ENCODE measurements at regions of chr1 and their contacts with region 1.

Region 1: GRCh38 chr1:235831148-235831547 is 35.6 kb downstream of the LYST start:
- DNase-seq: peak in 4 of 5 donors; percentile 34 to 58 (median 44)
- ATAC-seq: peak; percentile 79 to 98 (median 96)
- H3K4me3 ChIP-seq: no peak overlapping the region
- H3K27ac ChIP-seq: peak overlapping the region in 1 of 12 donors; percentile 7
- H3K4me1 ChIP-seq: peaks cover 0 to 21% (median 12%) of the 10 kb centered on the region in 12 donors
- H3K27me3 ChIP-seq: no peaks in the 10 kb centered on the region
- CTCF ChIP-seq: no peak
- POLR2A ChIP-seq: no peak

Region 2: GRCh38 chr1:235006132-235006943 is 824.8 kb before region 1 on chr1:
- intact Hi-C with region 1: no loop called
- DNase-seq: no peak
- ATAC-seq: no peak
- H3K4me3 ChIP-seq: no peak overlapping the region
- H3K27ac ChIP-seq: no peak overlapping the region
- H3K4me1 ChIP-seq: peaks cover 0 to 39% (median 0%) of the 10 kb centered on the region in 12 donors
- H3K27me3 ChIP-seq: no peaks in the 10 kb centered on the region
- CTCF ChIP-seq: no peak
- POLR2A ChIP-seq: no peak

Region 3: DNA sequence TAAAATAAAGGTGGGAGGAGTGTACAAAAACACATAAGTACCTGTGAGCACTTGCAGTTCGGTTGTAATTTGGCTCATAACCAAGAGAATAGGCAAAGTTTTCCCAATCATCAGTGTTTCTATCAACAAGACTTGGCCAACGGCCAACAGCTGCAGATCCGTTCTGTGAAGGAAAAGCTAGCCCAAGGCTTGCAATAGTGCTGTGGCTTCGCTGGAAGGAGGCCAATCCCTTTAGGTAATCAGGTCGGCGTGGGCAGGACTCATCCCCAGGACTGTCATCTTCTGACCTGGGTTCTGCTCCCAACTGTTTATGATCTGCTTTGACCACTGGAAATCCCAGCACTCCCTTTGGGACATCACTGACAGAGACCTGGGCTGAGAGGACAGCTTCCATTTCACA is 72.2 kb before region 1 on chr1:
- intact Hi-C with region 1: no loop called
- DNase-seq: peak in 1 of 5 donors; percentile 17
- ATAC-seq: no peak
- H3K4me3 ChIP-seq: no peak overlapping the region
- H3K27ac ChIP-seq: no peak overlapping the region
- H3K4me1 ChIP-seq: no peaks in the 10 kb centered on the region
- H3K27me3 ChIP-seq: no peaks in the 10 kb centered on the region
- CTCF ChIP-seq: no peak
- POLR2A ChIP-seq: no peak

Region 4: GRCh38 chr1:235783148-235783776 is 47.9 kb before region 1 on chr1:
- intact Hi-C with region 1: loop called in 1 of 10 experiments (anchors 10 kb)
- DNase-seq: no peak
- ATAC-seq: no peak
- H3K4me3 ChIP-seq: no peak overlapping the region
- H3K27ac ChIP-seq: no peak overlapping the region
- H3K4me1 ChIP-seq: peaks cover 0 to 3% (median 0%) of the 10 kb centered on the region in 12 donors
- H3K27me3 ChIP-seq: no peaks in the 10 kb centered on the region
- CTCF ChIP-seq: peak; percentile 27 to 65 (median 54)
- POLR2A ChIP-seq: no peak

Region 5: DNA sequence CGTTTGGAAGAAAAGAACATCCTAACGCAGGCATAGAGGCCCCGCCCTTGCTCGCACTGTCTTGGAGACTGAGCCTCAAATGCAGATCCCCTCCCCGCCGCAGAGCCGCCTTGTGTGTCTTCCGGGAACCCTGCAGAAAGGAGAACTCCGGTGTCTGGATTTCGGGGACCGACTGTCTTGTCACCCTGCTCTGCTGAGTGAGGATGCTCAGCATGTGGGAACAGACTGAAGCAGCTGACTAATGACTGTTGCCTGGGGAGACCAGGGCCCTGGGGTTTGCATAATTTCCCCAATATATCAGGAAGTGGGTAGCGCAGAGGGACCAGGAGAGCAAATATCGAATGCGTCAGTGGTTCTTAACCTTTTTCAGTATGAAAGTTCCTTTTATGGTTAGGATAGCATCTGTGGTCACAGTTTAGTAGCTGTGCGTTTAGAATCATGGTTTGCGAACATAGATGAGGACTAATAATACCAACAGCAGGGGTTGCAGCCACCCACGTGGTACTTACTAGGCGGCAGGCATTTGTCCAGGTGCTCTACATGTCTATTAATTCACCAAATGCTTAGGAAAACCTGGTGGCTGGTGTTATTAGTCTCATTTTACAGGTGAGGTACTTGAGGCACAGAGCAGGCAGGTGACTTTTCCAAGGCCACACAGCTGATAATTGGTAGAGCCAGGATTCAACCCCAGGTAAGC is 325.5 kb after region 1 on chr1:
- intact Hi-C with region 1: no loop called
- DNase-seq: peak in 2 of 5 donors; percentile 41 to 74
- ATAC-seq: peak in 1 of 4 donors; percentile 53
- H3K4me3 ChIP-seq: no peak overlapping the region
- H3K27ac ChIP-seq: peak overlapping the region in 1 of 12 donors; percentile 58
- H3K4me1 ChIP-seq: peaks cover 0 to 41% (median 6%) of the 10 kb centered on the region in 12 donors
- H3K27me3 ChIP-seq: no peaks in the 10 kb centered on the region
- CTCF ChIP-seq: no peak
- POLR2A ChIP-seq: no peak

Measured in heart left ventricle (tissue), 16 donors.